ENCODE measurements at regions of chr2 and their contacts with region 1.

Region 1: GRCh38 chr2:228401065-228401912 is 219.8 kb upstream of the SPHKAP start:
- DNase-seq: no peak
- ATAC-seq: peak; percentile 62
- H3K4me3 ChIP-seq: no peak overlapping the region
- H3K27ac ChIP-seq: no peak overlapping the region
- H3K4me1 ChIP-seq: no peaks in the 10 kb centered on the region
- H3K27me3 ChIP-seq: no peaks in the 10 kb centered on the region

Region 2: GRCh38 chr2:228875152-228875900 is 474.0 kb after region 1 on chr2:
- intact Hi-C with region 1: no loop called
- DNase-seq: no peak
- ATAC-seq: no peak
- H3K4me3 ChIP-seq: no peak overlapping the region
- H3K27ac ChIP-seq: no peak overlapping the region
- H3K4me1 ChIP-seq: no peaks in the 10 kb centered on the region
- H3K27me3 ChIP-seq: no peaks in the 10 kb centered on the region

Region 3: DNA sequence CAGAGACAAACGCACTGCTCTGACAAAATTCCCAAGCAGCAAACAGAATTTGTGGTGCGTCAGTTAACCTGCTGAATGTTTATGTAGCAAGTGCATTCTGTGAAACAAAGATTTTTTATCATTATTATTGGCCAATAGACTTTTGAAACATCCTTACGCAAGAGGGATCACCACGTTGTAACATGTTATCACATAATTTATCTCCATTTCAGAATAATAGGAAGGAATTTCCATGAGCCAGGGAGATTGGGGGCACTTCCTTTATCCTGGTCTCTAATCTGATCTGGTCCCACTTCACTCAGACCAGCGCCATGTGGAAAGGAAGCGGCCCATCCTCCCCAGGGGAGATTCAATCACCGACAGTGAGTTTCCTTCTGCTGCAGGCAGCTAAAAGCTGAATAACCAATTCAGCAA is 703.7 kb after region 1 on chr2:
- intact Hi-C with region 1: loop called in 1 of 2 experiments (anchors 10 kb)
- DNase-seq: no peak
- ATAC-seq: no peak
- H3K4me3 ChIP-seq: no peak overlapping the region
- H3K27ac ChIP-seq: no peak overlapping the region
- H3K4me1 ChIP-seq: peaks cover 0 to 6% of the 10 kb centered on the region in 2 donors
- H3K27me3 ChIP-seq: no peaks in the 10 kb centered on the region